ENCODE measurements at regions of chr15 and their contacts with region 1.

Region 1: DNA sequence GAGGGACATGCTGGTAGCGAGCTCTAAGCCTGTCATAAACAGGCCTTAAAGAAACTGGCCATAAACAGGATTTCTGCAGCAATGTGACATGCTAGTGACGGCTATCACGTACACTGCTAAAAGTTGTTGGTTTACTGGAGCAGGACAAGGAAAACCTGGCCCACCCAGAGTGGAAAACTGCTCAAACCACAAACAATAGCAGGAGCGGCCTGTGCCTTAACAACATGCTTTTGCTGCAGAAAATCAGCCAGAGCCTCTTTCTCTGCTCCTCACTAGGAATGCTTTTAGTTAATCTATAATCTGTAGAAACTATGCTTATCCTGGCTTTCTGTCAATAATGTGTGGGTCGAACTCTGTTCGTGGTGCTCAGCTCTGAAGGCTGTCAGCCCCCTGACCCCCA is 202.9 kb upstream of the UBE3A start:
- DNase-seq: no peak
- ATAC-seq: no peak
- H3K4me3 ChIP-seq: no peak overlapping the region
- H3K27ac ChIP-seq: no peak overlapping the region
- H3K4me1 ChIP-seq: peaks cover 0 to 17% (median 0%) of the 10 kb centered on the region in 12 donors
- H3K27me3 ChIP-seq: no peaks in the 10 kb centered on the region
- CTCF ChIP-seq: no peak
- POLR2A ChIP-seq: no peak

Region 2: GRCh38 chr15:25701721-25702465 is 60.1 kb after region 1 on chr15:
- intact Hi-C with region 1: loop called in 1 of 10 experiments (anchors 10 kb)
- DNase-seq: no peak
- ATAC-seq: no peak
- H3K4me3 ChIP-seq: no peak overlapping the region
- H3K27ac ChIP-seq: no peak overlapping the region
- H3K4me1 ChIP-seq: peaks cover 0 to 8% (median 0%) of the 10 kb centered on the region in 12 donors
- H3K27me3 ChIP-seq: no peaks in the 10 kb centered on the region
- CTCF ChIP-seq: no peak
- POLR2A ChIP-seq: no peak